ENCODE measurements at regions of chrX and their contacts with region 1.

Region 1: GRCh38 chrX:57595381-57595811 is 3.6 kb downstream of the ZXDB start:
- DNase-seq: peak in 1 of 2 experiments; percentile 84
- H3K4me3 ChIP-seq: peak overlapping the region; percentile 20; the same call in 1 of the 2 replicates
- H3K27ac ChIP-seq: peak overlapping the region; percentile 43
- H3K4me1 ChIP-seq: peaks cover 31% of the 10 kb centered on the region
- H3K27me3 ChIP-seq: no peaks in the 10 kb centered on the region
- CTCF ChIP-seq: no peak

Region 2: GRCh38 chrX:57573754-57574153 is 21.6 kb before region 1 on chrX:
- CTCF ChIA-PET with region 1: no interaction called
- POLR2A ChIA-PET with region 1: no interaction called
- intact Hi-C with region 1: no loop called
- DNase-seq: no peak
- H3K4me3 ChIP-seq: no peak overlapping the region
- H3K27ac ChIP-seq: no peak overlapping the region
- H3K4me1 ChIP-seq: no peaks in the 10 kb centered on the region
- H3K27me3 ChIP-seq: no peaks in the 10 kb centered on the region
- CTCF ChIP-seq: peak; percentile 53; the same call in 1 of the 2 replicates

Region 3: DNA sequence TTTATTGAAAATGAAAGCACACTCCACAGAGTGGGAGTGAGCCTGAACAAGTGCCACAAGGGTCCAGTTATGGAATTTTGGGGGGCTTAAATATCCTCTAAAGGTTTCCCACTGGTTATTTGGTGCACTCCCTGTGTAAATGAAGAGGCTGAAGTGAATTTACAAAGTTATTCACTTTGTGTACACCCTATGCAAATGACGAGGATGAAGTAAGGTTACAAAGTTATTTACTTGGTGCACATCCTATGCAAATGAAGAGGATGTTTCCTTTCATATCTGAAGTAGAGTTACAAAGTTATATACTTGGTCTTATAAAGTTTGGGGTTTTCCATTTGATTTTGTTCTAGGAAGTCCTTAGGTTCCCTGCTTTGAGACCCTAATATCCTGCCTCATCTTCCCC is 71.6 kb after region 1 on chrX:
- CTCF ChIA-PET with region 1: no interaction called
- POLR2A ChIA-PET with region 1: no interaction called
- intact Hi-C with region 1: no loop called
- DNase-seq: no peak
- H3K4me3 ChIP-seq: no peak overlapping the region
- H3K27ac ChIP-seq: no peak overlapping the region
- H3K4me1 ChIP-seq: no peaks in the 10 kb centered on the region
- H3K27me3 ChIP-seq: no peaks in the 10 kb centered on the region
- CTCF ChIP-seq: no peak

Region 4: DNA sequence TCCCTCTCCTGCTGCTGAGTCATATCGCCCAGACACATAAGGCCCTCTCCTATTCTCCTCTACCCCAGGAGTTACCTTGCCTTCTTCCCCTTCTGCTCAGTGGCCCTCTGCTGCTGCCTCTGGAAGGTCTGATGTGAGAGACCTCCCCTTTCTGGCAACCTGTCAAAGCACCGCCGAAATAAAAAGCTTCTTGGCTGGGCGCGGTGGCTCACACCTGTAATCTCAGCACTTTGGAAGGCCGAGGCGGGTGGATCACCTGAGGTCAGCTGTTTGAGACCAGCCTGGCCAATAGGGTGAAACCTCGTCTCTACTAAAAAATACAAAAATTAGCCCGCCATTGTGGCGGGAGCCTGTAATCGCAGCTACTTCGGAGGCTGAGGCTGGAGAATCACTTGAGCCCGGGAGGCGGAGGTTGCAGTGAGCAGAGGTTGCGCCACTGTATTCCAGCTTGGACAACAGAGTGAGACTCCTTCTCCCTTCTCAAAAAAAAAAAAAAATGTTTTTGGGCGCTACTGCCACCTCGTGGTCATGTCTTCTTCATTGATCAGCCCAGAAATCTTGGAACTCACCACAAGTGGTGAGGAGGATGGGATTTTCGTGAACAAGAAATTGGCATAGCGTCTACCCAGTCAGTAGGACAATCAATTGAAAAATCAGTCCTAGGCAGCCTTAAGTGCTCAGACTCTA is 323.5 kb after region 1 on chrX:
- CTCF ChIA-PET with region 1: no interaction called
- POLR2A ChIA-PET with region 1: no interaction called
- intact Hi-C with region 1: loop called (anchors 5 kb)
- DNase-seq: peak in 1 of 2 experiments; percentile 19
- H3K4me3 ChIP-seq: no peak overlapping the region
- H3K27ac ChIP-seq: no peak overlapping the region
- H3K4me1 ChIP-seq: no peaks in the 10 kb centered on the region
- H3K27me3 ChIP-seq: no peaks in the 10 kb centered on the region; the same call in 1 of the 2 replicates
- CTCF ChIP-seq: peak; percentile 67